SK-N-SH (cell line): ENCODE measurements at regions of chr9 and their contacts with region 1.

Region 1: DNA sequence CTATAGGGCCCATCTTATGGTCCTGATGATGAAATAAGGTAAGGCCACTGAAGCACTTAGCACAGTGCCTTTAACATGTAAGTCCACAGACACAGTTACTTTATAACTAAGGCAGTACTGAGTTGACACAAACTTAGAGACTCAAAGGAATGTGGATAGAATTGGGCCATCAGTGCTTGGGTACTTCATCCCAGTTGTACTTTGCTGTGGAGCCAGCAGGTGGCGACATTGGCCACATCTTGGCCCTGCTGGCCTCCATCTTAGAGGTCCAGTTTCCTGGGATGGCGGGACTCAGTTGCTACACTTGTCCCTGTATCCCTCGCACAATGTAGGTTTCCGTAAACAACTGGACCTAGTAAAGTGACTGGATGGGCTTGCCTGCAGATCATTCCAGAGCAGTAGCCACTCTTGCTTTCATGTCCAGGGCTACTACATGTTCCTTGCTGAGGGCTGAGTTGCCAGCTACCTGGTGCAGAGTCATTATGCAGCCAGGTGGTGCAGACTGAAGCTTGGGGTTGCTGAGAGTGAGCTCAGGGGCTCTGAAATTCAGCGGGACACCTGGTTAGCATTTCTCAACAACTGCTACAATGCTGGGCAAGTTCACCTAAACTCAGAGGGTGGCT is 10.6 kb downstream of the MTAP start:
- DNase-seq: peak; percentile 69
- H3K4me3 ChIP-seq: no peak overlapping the region
- H3K27ac ChIP-seq: peak overlapping the region in 1 of 2 experiments; percentile 50; a peak in 2 of 4 replicates
- H3K4me1 ChIP-seq: peaks cover 3% of the 10 kb centered on the region in 2 experiments; a peak in 3 of 4 replicates
- H3K27me3 ChIP-seq: no peaks in the 10 kb centered on the region
- CTCF ChIP-seq: peak; percentile 87
- EP300 ChIP-seq: no peak
- RAD21 ChIP-seq: peak; percentile 86

Region 2: DNA sequence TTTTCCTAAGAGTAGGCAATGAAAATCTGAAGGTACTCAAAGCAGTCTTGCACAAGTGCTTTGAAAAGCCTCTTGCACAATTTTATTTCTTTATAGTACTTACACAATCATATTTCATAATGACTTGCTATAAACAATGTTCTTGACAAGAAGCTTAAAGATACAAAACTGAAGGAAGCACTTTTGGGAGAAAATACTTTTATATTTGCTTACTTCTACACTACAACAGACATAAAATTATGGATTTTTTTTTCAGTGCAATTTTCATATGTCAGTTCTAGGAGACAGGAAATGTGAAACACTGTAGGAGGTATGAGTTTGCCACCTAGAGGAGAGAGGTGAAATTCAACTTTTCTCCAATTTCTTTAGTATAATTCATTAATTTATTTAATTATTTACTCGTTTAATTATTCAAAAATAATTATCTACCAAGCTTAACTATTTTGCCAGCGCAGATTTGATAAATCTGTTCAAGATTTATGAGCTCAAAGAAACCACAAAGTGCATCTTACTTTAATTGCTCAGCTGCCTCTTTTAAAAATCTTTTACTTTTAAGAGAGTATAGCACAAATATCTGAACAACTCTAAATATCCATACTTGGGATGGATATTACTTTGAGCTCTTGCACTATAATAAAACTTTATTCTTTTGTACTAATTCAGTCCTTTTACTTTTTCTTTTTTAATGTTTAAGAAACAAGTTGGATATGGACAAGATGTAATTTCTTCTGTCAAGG is 225.1 kb after region 1 on chr9:
- CTCF ChIA-PET with region 1: interaction called, 100 read pairs
- POLR2A ChIA-PET with region 1: no interaction called
- DNase-seq: peak; percentile 4
- H3K4me3 ChIP-seq: no peak overlapping the region
- H3K27ac ChIP-seq: no peak overlapping the region
- H3K4me1 ChIP-seq: no peaks in the 10 kb centered on the region; a peak in 1 of 4 replicates
- H3K27me3 ChIP-seq: no peaks in the 10 kb centered on the region
- CTCF ChIP-seq: peak; percentile 57
- EP300 ChIP-seq: no peak
- RAD21 ChIP-seq: peak; percentile 73

Region 3: GRCh38 chr9:22052376-22052945 is 239.4 kb after region 1 on chr9:
- CTCF ChIA-PET with region 1: interaction called, 15 read pairs
- POLR2A ChIA-PET with region 1: no interaction called
- DNase-seq: no peak
- H3K4me3 ChIP-seq: no peak overlapping the region
- H3K27ac ChIP-seq: peak overlapping the region; percentile 9 to 86; a peak in 3 of 4 replicates
- H3K4me1 ChIP-seq: 0 out of 4 replicates have a peak, but pooled peaks cover 0 to 6% of the 10 kb centered on the region in 2 experiments
- H3K27me3 ChIP-seq: no peaks in the 10 kb centered on the region
- CTCF ChIP-seq: no peak
- EP300 ChIP-seq: peak in 1 of 2 experiments; percentile 72; a peak in 2 of 4 replicates
- RAD21 ChIP-seq: no peak

Region 4: DNA sequence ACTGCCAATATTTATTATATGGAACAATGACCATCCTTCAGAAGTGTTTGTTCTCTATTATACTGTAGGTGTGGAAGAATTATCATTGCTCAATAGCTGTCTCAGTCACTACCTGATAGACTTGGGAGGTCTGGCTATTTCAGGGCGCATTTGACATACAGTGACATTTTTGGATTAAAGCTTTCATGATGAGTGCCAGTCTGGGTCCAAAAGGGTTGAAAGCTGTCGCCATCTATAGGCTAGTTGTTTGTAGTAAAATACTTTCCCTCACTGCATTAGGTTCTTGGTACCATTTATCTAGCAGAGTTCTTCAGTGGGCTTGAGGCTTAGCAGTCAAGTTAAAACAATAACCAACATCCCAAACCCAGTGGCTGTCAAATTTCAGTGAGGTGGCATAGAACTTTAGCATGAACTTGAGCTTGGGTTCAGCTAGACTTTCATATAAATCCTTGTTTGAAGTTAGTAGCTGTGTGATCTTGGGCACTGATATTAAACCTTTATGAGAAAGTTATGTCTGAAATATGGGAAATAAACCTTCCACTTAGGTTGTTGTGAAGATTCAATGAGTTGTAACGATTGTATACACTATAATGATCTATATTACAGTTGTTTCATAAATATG is 306.6 kb after region 1 on chr9:
- CTCF ChIA-PET with region 1: interaction called, 38 read pairs
- POLR2A ChIA-PET with region 1: no interaction called
- DNase-seq: peak; percentile 8
- H3K4me3 ChIP-seq: no peak overlapping the region
- H3K27ac ChIP-seq: no peak overlapping the region
- H3K4me1 ChIP-seq: peaks cover 0 to 10% of the 10 kb centered on the region in 2 experiments; a peak in 2 of 4 replicates
- H3K27me3 ChIP-seq: peaks cover 11% of the 10 kb centered on the region; the same call in 1 of the 2 replicates
- CTCF ChIP-seq: peak; percentile 68
- EP300 ChIP-seq: no peak
- RAD21 ChIP-seq: peak; percentile 68

Region 5: DNA sequence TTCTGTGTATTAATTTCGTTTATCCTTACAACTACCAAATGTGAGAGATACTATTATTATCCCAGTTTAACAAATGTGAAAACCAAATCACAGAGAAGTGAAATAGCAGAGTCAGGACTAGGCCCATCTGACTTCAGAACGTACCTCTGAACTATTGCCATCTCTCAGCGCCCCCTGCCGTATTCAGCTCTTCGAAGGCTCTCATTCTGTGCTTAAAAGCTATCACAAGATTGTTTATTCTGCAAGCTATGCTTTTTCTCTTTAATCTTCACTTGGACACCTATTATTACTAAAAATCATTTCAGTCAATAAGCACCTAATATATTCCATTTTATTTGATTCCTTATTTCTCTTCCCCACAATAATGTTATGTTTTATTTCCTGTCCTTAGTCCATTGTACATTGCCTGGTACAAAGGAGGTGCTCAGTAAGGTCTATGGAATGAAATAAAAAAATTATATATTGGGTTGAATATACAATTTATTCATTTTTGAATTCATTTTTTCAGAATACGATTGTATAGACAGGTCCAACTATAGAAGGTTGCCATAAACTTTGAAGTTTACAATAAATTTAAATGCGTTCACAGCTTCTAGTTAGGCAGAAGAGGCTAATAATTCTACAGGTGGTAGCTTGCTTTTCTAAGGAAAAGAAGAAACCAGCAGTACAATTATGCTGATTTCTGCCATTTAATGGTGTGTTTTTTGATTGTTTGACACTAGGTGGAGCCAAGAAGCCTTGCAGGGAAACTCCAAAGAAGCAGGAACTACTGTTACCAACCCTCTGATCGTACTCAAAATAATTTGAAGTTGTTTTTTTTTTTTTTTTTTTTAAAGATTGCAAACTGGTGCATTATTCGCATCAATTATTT is 431.3 kb after region 1 on chr9:
- CTCF ChIA-PET with region 1: interaction called, 10 read pairs
- POLR2A ChIA-PET with region 1: no interaction called
- DNase-seq: no peak
- H3K4me3 ChIP-seq: peak overlapping the region in 1 of 2 experiments; percentile 15; a peak in 1 of 4 replicates
- H3K27ac ChIP-seq: no peak overlapping the region
- H3K4me1 ChIP-seq: no peaks in the 10 kb centered on the region
- H3K27me3 ChIP-seq: peaks cover 5% of the 10 kb centered on the region; the same call in 1 of the 2 replicates
- CTCF ChIP-seq: peak; percentile 63
- EP300 ChIP-seq: no peak
- RAD21 ChIP-seq: peak; percentile 61

Region 6: GRCh38 chr9:22288661-22289060 is 475.6 kb after region 1 on chr9:
- CTCF ChIA-PET with region 1: no interaction called
- POLR2A ChIA-PET with region 1: no interaction called
- DNase-seq: no peak
- H3K4me3 ChIP-seq: no peak overlapping the region
- H3K27ac ChIP-seq: no peak overlapping the region
- H3K4me1 ChIP-seq: no peaks in the 10 kb centered on the region
- H3K27me3 ChIP-seq: no peaks in the 10 kb centered on the region; the same call in 1 of the 2 replicates
- CTCF ChIP-seq: no peak
- EP300 ChIP-seq: no peak
- RAD21 ChIP-seq: no peak